SK-N-SH (cell line): ENCODE measurements at regions of chr2 and their contacts with region 1.

Region 1: GRCh38 chr2:130342533-130343275 is at the start of gene IMP4:
- DNase-seq: peak; percentile 90
- H3K4me3 ChIP-seq: peak within 1 kb of the TSS; percentile 86 to 94
- H3K27ac ChIP-seq: peak within 1 kb of the TSS; percentile 94 to 97
- H3K4me1 ChIP-seq: peaks cover 11 to 17% of the 10 kb centered on the region in 2 experiments; a peak in 3 of 4 replicates
- H3K27me3 ChIP-seq: no peaks in the 10 kb centered on the region
- CTCF ChIP-seq: peak; percentile 43
- EP300 ChIP-seq: no peak
- RAD21 ChIP-seq: peak; percentile 21; the same call in 1 of the 2 replicates
- polyA plus RNA-seq, gene IMP4: 247 and 252 TPM in 2 replicates

Region 2: DNA sequence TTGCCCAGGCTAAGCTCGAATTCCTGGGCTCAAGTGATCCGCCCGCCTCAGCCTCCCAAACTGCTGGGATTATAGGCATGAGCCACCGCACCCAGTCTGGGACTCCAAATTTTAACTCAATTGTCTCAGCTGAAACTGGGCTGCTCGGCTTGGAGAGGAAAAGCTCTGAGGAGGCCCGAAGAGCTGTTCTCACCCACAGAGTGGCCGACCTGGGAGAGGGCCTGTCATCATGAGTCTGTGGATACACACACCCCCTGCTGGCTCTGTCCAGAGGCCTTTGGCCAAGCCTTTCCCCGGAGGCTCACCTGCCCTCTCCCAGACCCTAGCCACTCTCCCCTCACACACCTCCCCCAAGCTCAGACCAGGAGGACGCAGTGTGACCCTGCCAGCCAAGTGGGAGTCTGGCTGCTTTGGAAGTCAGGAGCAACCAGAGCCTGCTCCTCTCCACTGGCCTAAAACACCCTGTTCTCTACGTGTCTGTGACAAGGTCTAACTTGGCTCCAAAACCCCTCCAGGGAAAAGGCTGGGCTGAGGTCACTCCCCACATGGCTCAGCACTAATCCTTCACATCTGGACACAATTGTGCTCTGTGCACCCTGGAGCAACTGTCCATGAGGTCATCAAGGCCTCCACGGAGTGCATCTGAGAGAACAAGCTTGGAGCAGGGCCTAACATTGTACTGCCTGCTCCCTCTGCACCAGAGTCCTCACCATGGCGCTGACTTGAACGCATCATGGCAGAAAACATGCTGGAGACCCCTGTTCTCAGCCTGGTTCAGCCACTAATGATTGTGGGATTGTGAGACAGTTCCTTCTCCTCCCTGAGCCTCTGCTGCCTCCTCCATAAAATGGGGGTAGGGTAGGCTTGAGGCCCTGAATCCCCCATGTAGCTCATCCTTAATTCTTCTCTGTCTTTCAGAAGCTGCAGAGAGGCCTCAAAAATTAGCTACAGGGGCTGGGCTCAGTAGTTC is 413.1 kb before region 1 on chr2:
- CTCF ChIA-PET with region 1: no interaction called
- POLR2A ChIA-PET with region 1: interaction called, 12 read pairs
- DNase-seq: peak; percentile 79
- H3K4me3 ChIP-seq: no peak overlapping the region
- H3K27ac ChIP-seq: peak overlapping the region in 1 of 2 experiments; percentile 89; a peak in 2 of 4 replicates
- H3K4me1 ChIP-seq: peaks cover 0 to 37% of the 10 kb centered on the region in 2 experiments; a peak in 1 of 4 replicates
- H3K27me3 ChIP-seq: no peaks in the 10 kb centered on the region
- CTCF ChIP-seq: no peak
- EP300 ChIP-seq: peak in 1 of 2 experiments; percentile 92; a peak in 2 of 4 replicates
- RAD21 ChIP-seq: no peak; the same call in 1 of the 2 replicates

Region 3: DNA sequence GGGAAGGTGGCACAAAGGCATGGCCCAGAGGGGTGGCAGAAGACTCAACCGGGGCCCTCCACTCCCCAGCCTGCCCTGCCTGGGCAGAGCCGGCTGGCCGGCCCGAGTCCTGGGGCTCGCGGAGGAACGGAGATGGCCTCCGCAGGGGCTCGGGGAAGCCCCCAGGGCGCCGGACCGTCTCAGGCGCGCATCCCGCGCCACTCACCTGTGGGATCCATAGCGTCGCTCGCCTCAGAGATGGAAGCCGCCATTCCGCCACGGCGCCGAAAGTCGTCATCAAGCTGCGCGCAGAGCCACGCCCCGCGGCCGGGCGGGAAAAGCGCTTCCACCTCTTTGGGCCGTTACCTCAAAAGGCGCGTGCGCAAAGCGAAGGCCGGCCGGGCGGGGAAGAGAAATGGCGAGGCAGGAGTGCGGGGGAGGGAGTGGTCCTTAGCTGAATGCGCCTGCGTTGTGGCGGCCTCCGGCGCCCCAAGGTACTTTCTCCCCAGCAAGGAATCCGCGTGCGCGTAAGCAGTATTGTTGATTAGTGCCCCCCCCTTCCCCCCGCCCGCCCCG is 161.3 kb before region 1 on chr2 and contains the start of gene SMPD4:
- CTCF ChIA-PET with region 1: interaction called, 113 read pairs
- POLR2A ChIA-PET with region 1: interaction called, 14 read pairs
- DNase-seq: peak; percentile 93
- H3K4me3 ChIP-seq: peak within 1 kb of the TSS; percentile 92 to 95
- H3K27ac ChIP-seq: peak within 1 kb of the TSS; percentile 52 to 92
- H3K4me1 ChIP-seq: peaks cover 0 to 25% of the 10 kb centered on the region in 2 experiments; a peak in 2 of 4 replicates
- H3K27me3 ChIP-seq: no peaks in the 10 kb centered on the region
- CTCF ChIP-seq: no peak
- EP300 ChIP-seq: no peak
- RAD21 ChIP-seq: no peak
- polyA plus RNA-seq, gene SMPD4: 33.1 and 43.0 TPM in 2 replicates

Region 4: GRCh38 chr2:130332271-130333073 is 10.2 kb before region 1 on chr2:
- CTCF ChIA-PET with region 1: interaction called, 19 read pairs
- POLR2A ChIA-PET with region 1: no interaction called
- DNase-seq: peak; percentile 88
- H3K4me3 ChIP-seq: no peak overlapping the region; a peak in 2 of 4 replicates
- H3K27ac ChIP-seq: no peak overlapping the region; a peak in 1 of 4 replicates
- H3K4me1 ChIP-seq: peaks cover 0 to 8% of the 10 kb centered on the region in 2 experiments; a peak in 1 of 4 replicates
- H3K27me3 ChIP-seq: peaks cover 7% of the 10 kb centered on the region; the same call in 1 of the 2 replicates
- CTCF ChIP-seq: peak; percentile 96
- EP300 ChIP-seq: no peak
- RAD21 ChIP-seq: peak; percentile 97

Region 5: DNA sequence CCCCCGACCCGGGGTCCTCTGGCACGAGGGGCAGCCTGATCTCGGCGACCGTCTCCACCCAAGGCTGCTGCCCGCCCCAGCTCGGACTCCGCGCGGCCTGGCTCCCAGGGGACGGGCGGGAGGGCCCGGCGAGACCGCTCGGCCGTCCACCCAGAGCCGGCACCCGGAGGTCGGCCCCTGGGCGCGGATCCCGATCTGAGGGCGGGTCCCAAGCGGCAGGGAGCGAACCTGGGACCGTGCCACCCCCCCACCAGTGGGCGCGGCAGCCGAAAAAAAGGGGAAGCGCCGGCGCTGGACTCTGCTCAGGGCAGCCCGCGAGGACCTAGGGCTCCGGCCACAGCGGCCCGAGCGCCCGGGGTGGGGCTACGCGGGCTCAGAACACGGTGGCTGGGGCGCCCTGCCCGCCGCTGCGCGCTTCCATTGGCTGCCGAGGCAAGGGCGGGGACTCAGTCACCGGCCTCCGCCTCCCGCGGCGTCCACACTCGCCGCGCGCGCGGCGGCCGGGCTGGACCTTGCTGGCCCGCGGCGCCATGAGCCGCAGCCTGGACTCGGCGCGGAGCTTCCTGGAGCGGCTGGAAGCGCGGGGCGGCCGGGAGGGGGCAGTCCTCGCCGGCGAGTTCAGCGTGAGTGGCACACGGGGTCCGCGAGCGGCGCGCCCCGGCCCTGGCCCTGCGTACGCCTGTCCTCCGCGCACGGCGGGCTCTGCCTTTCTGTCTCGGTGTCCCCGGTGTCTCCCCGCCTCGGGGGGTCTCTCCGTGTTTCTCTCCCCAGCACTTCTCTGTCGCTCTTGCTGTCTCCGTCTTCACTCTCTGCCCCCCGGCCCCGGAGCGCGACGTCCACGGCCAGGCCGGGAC is 13.1 kb after region 1 on chr2 and contains the start of gene PTPN18:
- CTCF ChIA-PET with region 1: interaction called, 20 read pairs
- POLR2A ChIA-PET with region 1: interaction called, 38 read pairs
- DNase-seq: peak; percentile 97
- H3K4me3 ChIP-seq: peak within 1 kb of the TSS; percentile 69 to 78
- H3K27ac ChIP-seq: peak within 1 kb of the TSS in 1 of 2 experiments; percentile 65; a peak in 2 of 4 replicates
- H3K4me1 ChIP-seq: peaks cover 0 to 24% of the 10 kb centered on the region in 2 experiments; a peak in 2 of 4 replicates
- H3K27me3 ChIP-seq: no peaks in the 10 kb centered on the region
- CTCF ChIP-seq: peak; percentile 55
- EP300 ChIP-seq: no peak
- RAD21 ChIP-seq: peak; percentile 53
- polyA plus RNA-seq, gene PTPN18: 30.4 and 31.7 TPM in 2 replicates

Region 6: DNA sequence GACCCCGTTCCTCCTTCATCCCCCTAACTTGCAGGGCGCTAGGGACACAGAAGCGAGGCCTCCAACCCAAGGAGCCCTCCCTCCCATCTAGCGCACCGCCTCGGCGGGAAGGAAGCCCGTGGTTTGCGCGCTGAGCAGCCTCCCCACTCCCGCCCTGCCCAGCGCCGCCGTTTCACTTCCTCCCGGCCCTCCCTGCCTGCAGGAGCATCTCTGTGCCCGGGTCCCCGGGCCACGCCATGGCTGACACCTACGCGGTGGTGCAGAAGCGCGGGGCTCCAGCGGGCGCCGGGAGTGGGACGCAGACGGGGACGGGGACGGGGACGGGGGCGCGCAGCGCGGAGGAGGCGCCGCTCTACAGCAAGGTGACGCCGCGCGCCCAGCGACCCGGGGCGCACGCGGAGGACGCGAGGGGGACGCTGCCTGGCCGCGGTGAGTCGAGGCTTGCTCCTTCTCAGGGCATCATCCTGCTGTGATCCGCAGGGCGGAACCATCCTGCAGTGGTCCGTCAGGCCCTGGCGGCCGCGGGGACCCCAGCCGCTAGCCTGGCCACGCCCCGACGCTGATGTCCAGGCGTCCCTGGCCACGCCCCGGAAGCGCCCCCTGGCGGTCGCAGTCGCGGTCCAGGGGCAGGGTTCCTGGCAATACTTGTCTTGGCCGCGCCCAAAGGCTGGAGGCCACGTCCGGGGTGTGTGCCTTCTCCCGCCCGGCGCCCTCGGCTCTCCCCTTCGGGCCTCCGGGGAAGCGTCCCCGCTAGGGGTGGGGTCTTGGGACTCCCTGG is 29.5 kb after region 1 on chr2:
- CTCF ChIA-PET with region 1: interaction called, 20 read pairs
- POLR2A ChIA-PET with region 1: interaction called, 28 read pairs
- DNase-seq: peak; percentile 98
- H3K4me3 ChIP-seq: peak overlapping the region; percentile 87 to 99
- H3K27ac ChIP-seq: peak overlapping the region; percentile 52 to 91
- H3K4me1 ChIP-seq: peaks cover 0 to 18% of the 10 kb centered on the region in 2 experiments; a peak in 1 of 4 replicates
- H3K27me3 ChIP-seq: no peaks in the 10 kb centered on the region
- CTCF ChIP-seq: peak; percentile 77
- EP300 ChIP-seq: no peak
- RAD21 ChIP-seq: peak; percentile 51

Region 7: GRCh38 chr2:130391058-130391871 is 48.6 kb after region 1 on chr2:
- CTCF ChIA-PET with region 1: no interaction called
- POLR2A ChIA-PET with region 1: interaction called, 10 read pairs
- DNase-seq: peak; percentile 89
- H3K4me3 ChIP-seq: peak overlapping the region; percentile 71 to 73
- H3K27ac ChIP-seq: peak overlapping the region; percentile 72 to 90
- H3K4me1 ChIP-seq: peaks cover 0 to 10% of the 10 kb centered on the region in 2 experiments; a peak in 1 of 4 replicates
- H3K27me3 ChIP-seq: no peaks in the 10 kb centered on the region
- CTCF ChIP-seq: no peak
- EP300 ChIP-seq: no peak
- RAD21 ChIP-seq: no peak